ENCODE measurements at regions of chr19 and their contacts with region 1.

Region 1: GRCh38 chr19:56567274-56568120 is at the start of gene ZNF470:
- DNase-seq: peak; percentile 97 to 98
- ATAC-seq: peak; percentile 99
- H3K4me3 ChIP-seq: peak within 1 kb of the TSS; percentile 68 to 99
- H3K27ac ChIP-seq: peak within 1 kb of the TSS in 1 of 2 donors; percentile 75
- H3K4me1 ChIP-seq: no peaks in the 10 kb centered on the region
- H3K27me3 ChIP-seq: no peaks in the 10 kb centered on the region
- total RNA-seq, gene ZNF470: 4.8 to 7.1 TPM

Region 2: DNA sequence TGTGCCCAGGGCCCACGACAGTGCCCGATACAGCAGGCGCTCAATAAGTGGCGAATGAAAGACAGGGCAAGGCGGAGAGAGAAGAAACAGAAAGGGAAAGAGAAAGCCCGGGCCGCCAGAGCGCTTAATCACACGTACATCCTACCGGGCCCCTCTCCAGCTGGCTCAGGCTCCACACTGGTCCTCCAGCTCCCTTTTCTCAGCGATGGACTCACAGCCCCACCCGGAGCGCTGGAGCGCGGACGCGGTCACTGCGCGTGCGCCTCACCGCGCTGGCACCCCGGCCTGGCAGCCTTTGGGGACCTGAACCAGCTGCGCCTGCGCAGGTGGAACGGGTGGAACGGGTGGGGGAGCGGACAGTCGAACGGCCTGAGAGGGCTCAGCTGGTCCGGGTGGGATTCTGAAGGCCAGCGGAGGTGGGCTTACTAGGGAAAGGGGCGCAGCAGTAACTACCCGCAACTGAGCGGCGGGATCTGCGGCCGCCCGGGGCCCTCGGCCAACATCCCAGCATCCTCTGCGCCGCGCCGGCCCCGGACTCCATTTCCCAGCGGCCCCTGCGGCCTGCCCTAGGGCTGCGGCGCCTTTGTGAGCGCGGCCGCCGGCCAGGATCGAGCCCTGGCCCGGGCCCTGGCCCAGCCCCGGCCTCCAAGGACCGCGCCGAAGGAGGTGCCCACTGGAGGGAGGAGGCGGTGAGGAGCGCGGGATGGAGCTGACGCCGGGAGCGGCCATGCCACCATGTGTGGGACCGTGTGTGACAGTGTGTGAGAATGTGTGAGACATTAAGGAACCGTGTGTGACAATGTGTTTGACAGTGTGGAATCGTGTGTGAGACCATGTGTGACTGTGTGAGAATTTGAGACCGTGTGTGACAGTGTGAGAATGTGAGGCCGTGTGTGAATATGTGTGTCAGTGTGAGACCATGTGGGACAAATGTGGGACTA is 163.5 kb before region 1 on chr19 and contains the start of gene ZNF583:
- intact Hi-C with region 1: loop called in 1 of 2 experiments (anchors 10 kb)
- DNase-seq: peak; percentile 98 to 99
- ATAC-seq: peak; percentile 99
- H3K4me3 ChIP-seq: peak within 1 kb of the TSS; percentile 50 to 69
- H3K27ac ChIP-seq: peak within 1 kb of the TSS in 1 of 2 donors; percentile 38
- H3K4me1 ChIP-seq: no peaks in the 10 kb centered on the region
- H3K27me3 ChIP-seq: no peaks in the 10 kb centered on the region
- total RNA-seq, gene ZNF583: 6.2 to 9.4 TPM

Region 3: GRCh38 chr19:56508290-56508778 is 59.2 kb before region 1 on chr19:
- intact Hi-C with region 1: no loop called
- DNase-seq: no peak
- ATAC-seq: no peak
- H3K4me3 ChIP-seq: peak overlapping the region; percentile 42 to 70
- H3K27ac ChIP-seq: peak overlapping the region in 1 of 2 donors; percentile 95
- H3K4me1 ChIP-seq: no peaks in the 10 kb centered on the region
- H3K27me3 ChIP-seq: no peaks in the 10 kb centered on the region

Region 4: DNA sequence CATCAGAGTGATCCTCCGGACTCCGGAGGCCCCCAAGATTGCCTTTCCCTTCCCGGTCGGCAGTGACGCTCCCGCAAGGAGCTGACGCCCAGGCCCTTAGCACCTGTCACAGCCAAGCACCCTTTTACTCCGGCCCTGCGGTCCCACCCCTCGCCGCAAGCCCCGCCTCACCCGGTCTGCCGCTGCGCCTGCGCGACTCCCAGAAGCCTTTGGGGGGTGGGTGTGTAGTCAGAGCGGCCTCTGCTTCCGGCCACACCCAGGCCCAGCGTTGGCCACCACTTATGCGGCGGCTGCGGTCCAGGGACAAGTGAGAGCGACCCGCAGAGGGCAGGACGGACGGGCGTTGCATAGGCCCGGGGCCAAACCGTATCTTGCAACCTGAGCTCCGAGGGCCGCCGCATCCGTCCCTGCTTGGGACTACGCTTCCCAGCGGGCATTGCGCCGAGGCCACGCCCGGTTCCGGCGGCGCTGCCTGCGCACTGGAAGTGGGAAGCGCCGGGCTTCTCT is 29.2 kb before region 1 on chr19:
- intact Hi-C with region 1: loop called (anchors 1 to 2 kb)
- DNase-seq: peak; percentile 94 to 97
- ATAC-seq: peak; percentile 98
- H3K4me3 ChIP-seq: peak overlapping the region; percentile 52 to 96
- H3K27ac ChIP-seq: peak overlapping the region in 1 of 2 donors; percentile 89
- H3K4me1 ChIP-seq: no peaks in the 10 kb centered on the region
- H3K27me3 ChIP-seq: no peaks in the 10 kb centered on the region

Region 5: GRCh38 chr19:56594783-56595547 is 27.5 kb after region 1 on chr19 and contains the start of gene ZNF71:
- intact Hi-C with region 1: loop called in 1 of 2 experiments (anchors 1 kb)
- DNase-seq: peak; percentile 94 to 97
- ATAC-seq: peak; percentile 96
- H3K4me3 ChIP-seq: peak within 1 kb of the TSS; percentile 76 to 89
- H3K27ac ChIP-seq: peak within 1 kb of the TSS in 1 of 2 donors; percentile 11
- H3K4me1 ChIP-seq: no peaks in the 10 kb centered on the region
- H3K27me3 ChIP-seq: no peaks in the 10 kb centered on the region
- total RNA-seq, gene ZNF71: 9.7 to 10.5 TPM

Region 6: GRCh38 chr19:56671613-56671994 is 104.1 kb after region 1 on chr19 and contains the start of gene ZNF835:
- intact Hi-C with region 1: no loop called
- DNase-seq: peak; percentile 96 to 98
- ATAC-seq: peak; percentile 94
- H3K4me3 ChIP-seq: peak within 1 kb of the TSS; percentile 9 to 68
- H3K27ac ChIP-seq: no peak within 1 kb of the TSS
- H3K4me1 ChIP-seq: no peaks in the 10 kb centered on the region
- H3K27me3 ChIP-seq: no peaks in the 10 kb centered on the region
- total RNA-seq, gene ZNF835: 2.5 to 2.8 TPM

Measured in aorta (tissue), 5 donors.